Activated CD8-positive, alpha-beta T cell treated with anti-CD3 and anti-CD28 coated beads, Interleukin-2, amount 10 ng/mL, durations not matched to agents 7 days and 5 days (primary cell): ENCODE measurements at regions of chr17 and their contacts with region 1.

Region 1: DNA sequence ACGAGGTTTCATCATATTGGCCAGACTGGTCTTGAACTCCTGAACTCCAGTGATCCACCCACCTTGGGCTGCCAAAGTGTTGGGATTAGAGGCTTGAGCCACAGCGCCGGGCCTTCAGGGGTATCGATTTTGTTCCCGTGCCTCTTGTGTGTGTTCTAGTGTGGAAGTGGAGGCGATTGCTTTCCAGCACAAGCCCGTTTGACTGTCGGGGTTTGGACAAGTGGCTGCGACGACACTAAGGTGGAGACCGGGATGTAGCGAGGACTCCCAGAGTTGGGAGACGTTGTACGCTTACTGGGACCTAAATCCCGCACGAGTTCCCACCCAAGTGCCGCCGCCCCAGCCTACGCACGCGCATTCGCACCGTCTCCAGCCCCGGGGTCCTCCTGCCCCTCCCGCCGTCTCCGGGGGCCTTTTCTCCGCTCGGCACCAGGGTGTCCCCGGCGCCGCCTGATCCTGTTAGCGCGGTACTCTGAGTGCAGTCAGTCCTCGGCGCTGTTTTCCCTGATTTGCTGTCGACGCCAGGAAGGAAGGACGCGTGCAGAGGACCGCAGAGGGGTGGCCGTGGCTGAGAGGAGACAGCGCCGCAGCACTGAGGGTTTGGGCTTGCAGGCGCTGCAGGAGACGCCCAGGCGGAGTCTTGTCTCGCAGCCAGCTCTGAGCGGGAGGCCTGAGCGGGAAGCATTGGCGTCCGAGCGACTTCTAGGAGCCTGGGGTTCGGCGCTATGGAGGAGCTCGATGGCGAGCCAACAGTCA is at the start of gene NUP85:
- DNase-seq: peak; percentile 94
- ATAC-seq: peak; percentile 87
- H3K4me3 Mint-ChIP-seq: peak within 1 kb of the TSS; percentile 97
- H3K27ac Mint-ChIP-seq: peak within 1 kb of the TSS; percentile 100
- H3K4me1 Mint-ChIP-seq: peaks cover 35% of the 10 kb centered on the region
- H3K27me3 Mint-ChIP-seq: no peaks in the 10 kb centered on the region
- total RNA-seq, gene NUP85: 135 TPM

Region 2: GRCh38 chr17:75059369-75060345 is 145.6 kb before region 1 on chr17:
- CTCF ChIA-PET with region 1: interaction called, 13 read pairs
- POLR2A ChIA-PET with region 1: interaction called, 5 read pairs
- DNase-seq: no peak
- ATAC-seq: no peak
- H3K4me3 Mint-ChIP-seq: no peak overlapping the region
- H3K27ac Mint-ChIP-seq: no peak overlapping the region
- H3K4me1 Mint-ChIP-seq: peaks cover 18% of the 10 kb centered on the region
- H3K27me3 Mint-ChIP-seq: no peaks in the 10 kb centered on the region

Region 3: GRCh38 chr17:75131280-75132017 is 73.8 kb before region 1 on chr17 and contains the start of gene NT5C:
- CTCF ChIA-PET with region 1: interaction called, 17 read pairs
- POLR2A ChIA-PET with region 1: interaction called, 3 read pairs
- DNase-seq: peak; percentile 77
- ATAC-seq: peak; percentile 78
- H3K4me3 Mint-ChIP-seq: peak within 1 kb of the TSS; percentile 87
- H3K27ac Mint-ChIP-seq: peak within 1 kb of the TSS; percentile 88
- H3K4me1 Mint-ChIP-seq: peaks cover 27% of the 10 kb centered on the region
- H3K27me3 Mint-ChIP-seq: no peaks in the 10 kb centered on the region
- total RNA-seq, gene NT5C: 68.5 to 68.8 TPM

Region 4: DNA sequence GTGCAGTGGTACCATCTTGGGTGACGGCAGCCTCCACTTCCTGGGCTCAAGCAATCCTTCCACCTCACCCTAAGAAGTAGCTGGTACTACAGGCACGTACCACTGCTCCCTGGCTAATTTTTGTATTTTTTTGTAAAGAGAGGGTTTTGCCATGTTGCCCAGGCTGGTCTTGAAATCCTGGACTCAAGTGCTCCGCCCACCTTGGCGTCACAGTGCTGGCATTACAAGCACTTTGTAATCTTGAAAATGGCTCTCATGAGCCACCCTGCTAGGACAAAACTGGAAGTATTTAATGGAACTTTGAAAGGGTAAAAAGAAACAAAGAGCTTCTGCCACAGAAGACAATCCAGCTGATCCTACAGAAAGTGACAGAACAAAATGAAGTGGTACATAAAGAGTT is 31.7 kb before region 1 on chr17:
- CTCF ChIA-PET with region 1: interaction called, 88 read pairs
- POLR2A ChIA-PET with region 1: interaction called, 3 read pairs
- DNase-seq: no peak
- ATAC-seq: no peak
- H3K4me3 Mint-ChIP-seq: no peak overlapping the region
- H3K27ac Mint-ChIP-seq: peak overlapping the region; percentile 28
- H3K4me1 Mint-ChIP-seq: peaks cover 21% of the 10 kb centered on the region
- H3K27me3 Mint-ChIP-seq: no peaks in the 10 kb centered on the region

Region 5: DNA sequence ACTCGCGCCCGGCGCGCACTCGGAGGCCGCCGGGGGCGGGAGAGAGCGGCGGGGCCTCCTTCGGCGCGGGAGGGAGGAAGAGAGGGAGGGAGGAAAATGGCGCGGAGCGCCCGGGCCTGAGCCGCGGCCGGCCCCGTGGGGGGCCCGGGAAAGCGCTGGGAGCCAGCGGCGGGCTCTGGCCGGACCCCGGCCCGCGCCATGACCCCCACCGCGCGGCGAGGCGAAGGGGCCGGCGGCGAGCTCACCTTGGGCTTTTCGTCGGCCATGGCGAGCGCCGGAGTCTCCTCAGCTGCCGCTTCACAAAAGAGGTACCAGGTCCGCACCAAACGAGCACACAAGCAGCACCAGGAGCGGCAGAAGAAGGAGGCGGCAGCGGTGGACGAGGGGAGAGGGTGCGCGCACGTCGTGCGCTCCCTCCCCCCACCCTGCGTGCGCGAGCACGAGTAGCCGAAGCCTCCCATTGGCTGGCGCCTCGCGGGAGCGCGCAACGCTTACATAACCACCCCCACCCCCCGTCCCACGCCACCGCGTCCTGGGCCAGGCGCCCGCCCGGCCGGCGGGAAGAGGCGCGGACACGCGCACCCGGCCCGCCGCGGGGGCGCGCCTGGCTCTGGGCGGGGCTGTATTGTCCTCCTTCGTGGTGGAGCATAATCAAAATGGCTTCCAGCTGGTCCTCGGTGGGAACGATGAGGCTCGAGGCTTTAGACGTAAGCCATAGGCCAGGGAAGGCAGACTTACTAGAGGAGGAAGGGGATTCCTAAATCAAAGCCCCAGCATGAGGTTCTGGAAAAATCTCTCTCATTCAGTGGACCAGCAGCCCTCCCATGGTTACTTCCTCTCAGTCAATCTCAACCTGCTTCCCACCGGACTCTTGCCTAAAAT is 22.4 kb before region 1 on chr17 and contains the start of gene SUMO2:
- CTCF ChIA-PET with region 1: interaction called, 67 read pairs
- POLR2A ChIA-PET with region 1: interaction called, 6 read pairs
- DNase-seq: peak; percentile 96
- ATAC-seq: peak; percentile 82
- H3K4me3 Mint-ChIP-seq: peak within 1 kb of the TSS; percentile 90
- H3K27ac Mint-ChIP-seq: peak within 1 kb of the TSS; percentile 98
- H3K4me1 Mint-ChIP-seq: peaks cover 44% of the 10 kb centered on the region
- H3K27me3 Mint-ChIP-seq: no peaks in the 10 kb centered on the region
- total RNA-seq, gene SUMO2: 491 to 520 TPM